ENCODE measurements at regions of chr17 and their contacts with region 1.

Region 1: DNA sequence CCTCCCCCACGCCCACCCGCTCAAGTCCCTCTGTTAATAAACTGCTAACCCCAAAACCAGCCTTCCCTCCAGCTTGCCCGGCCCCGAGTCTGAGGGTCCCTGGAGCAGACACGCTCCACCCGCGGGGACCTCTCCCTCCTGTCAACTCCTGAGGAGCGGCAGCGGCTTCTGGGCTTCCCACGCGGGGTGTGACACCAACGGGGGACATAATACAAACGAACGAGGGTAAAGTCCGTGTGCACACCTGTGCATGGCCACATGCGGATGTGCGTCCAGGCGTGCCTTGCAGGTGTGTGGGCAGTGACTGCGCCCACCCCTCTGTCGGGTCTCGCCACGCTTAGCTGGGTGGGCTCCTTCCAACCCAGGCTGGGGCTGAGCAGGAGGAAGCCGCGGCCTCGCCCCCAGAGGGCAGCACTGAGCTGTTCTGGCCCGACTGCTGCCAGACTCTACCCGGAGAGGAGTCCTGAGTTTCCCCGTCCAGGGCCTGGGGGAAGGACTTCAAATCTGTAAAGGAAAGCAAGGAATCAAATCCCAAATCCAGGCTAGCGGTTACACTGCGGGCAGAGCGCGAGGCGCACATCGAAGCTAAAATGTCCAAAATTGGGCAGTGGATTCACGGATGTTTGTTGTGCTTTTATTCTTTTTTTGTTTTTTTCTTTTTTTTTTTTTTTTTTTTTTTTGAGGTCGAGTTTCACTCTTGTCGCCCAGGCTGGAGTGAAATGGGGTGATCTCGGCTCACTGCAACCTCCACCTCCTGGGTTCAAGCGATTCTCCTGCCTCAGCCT is 24.2 kb upstream of the KRT17 start:
- DNase-seq: peak; percentile 70 to 93 (median 83)
- ATAC-seq: peak; percentile 93
- H3K4me3 ChIP-seq: peak overlapping the region; percentile 87
- H3K4me3 Mint-ChIP-seq: peak overlapping the region in 9 of 10 donors; percentile 63 to 86 (median 81)
- H3K27ac ChIP-seq: peak overlapping the region; percentile 24
- H3K27ac Mint-ChIP-seq: peak overlapping the region in 7 of 9 donors; percentile 28 to 82 (median 77)
- H3K4me1 ChIP-seq: peaks cover 8 to 12% of the 10 kb centered on the region in 2 donors
- H3K4me1 Mint-ChIP-seq: peaks cover 6 to 14% (median 9%) of the 10 kb centered on the region in 7 donors
- H3K27me3 ChIP-seq: no peaks in the 10 kb centered on the region
- H3K27me3 Mint-ChIP-seq: no peaks in the 10 kb centered on the region

Region 2: GRCh38 chr17:40622509-40622928 is 1026.1 kb before region 1 on chr17:
- CTCF ChIA-PET with region 1: no interaction called
- POLR2A ChIA-PET with region 1: no interaction called
- intact Hi-C with region 1: loop called in 1 of 2 experiments (anchors 5 kb)
- DNase-seq: peak in 5 of 9 donors; percentile 38 to 60 (median 53)
- ATAC-seq: peak; percentile 74
- H3K4me3 ChIP-seq: peak overlapping the region; percentile 28
- H3K4me3 Mint-ChIP-seq: peak overlapping the region; percentile 54 to 81 (median 66)
- H3K27ac ChIP-seq: peak overlapping the region; percentile 18
- H3K27ac Mint-ChIP-seq: peak overlapping the region; percentile 11 to 88 (median 73)
- H3K4me1 ChIP-seq: peaks cover 27 to 35% of the 10 kb centered on the region in 2 donors
- H3K4me1 Mint-ChIP-seq: peaks cover 21 to 61% (median 48%) of the 10 kb centered on the region in 7 donors
- H3K27me3 ChIP-seq: no peaks in the 10 kb centered on the region
- H3K27me3 Mint-ChIP-seq: no peaks in the 10 kb centered on the region

Region 3: DNA sequence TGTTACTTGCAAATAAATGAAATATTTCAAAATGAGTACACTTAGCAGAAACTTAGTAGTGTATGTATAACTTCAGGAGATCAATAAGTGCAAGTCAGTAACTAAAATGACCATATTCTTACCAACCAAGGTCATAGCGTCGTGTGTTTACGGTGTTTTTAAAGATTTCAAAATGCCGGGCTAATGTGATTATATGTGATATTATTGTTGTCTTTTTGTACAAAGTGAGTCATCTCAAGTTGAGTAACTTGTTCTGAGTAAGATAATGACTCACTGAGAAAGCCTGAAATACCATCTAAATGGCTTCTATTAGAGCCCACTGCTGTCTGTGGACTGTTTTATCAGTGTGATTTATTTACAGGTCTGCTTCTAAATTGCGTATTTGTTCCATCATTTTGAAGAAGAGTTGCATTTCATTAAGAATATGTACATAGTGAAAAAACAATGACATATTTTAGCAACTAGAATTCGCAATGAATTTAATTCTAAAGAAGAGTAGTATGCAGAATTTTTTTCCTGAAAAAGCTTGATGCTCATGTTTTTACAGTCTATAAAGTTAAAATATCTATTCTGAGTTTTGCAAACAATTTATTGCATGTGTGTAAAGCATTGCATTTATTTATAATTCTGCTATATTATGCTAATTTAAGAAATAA is 794.3 kb before region 1 on chr17:
- CTCF ChIA-PET with region 1: interaction called, 23 read pairs
- POLR2A ChIA-PET with region 1: no interaction called
- intact Hi-C with region 1: loop called (anchors 1 to 5 kb)
- DNase-seq: no peak
- ATAC-seq: no peak
- H3K4me3 ChIP-seq: no peak overlapping the region
- H3K4me3 Mint-ChIP-seq: no peak overlapping the region
- H3K27ac ChIP-seq: no peak overlapping the region
- H3K27ac Mint-ChIP-seq: no peak overlapping the region
- H3K4me1 ChIP-seq: no peaks in the 10 kb centered on the region
- H3K4me1 Mint-ChIP-seq: peaks cover 0 to 6% (median 0%) of the 10 kb centered on the region in 7 donors
- H3K27me3 ChIP-seq: no peaks in the 10 kb centered on the region
- H3K27me3 Mint-ChIP-seq: peaks cover 19 to 53% (median 27%) of the 10 kb centered on the region in 5 donors

Region 4: GRCh38 chr17:41486809-41487720 is 161.5 kb before region 1 on chr17:
- CTCF ChIA-PET with region 1: no interaction called
- POLR2A ChIA-PET with region 1: no interaction called
- intact Hi-C with region 1: loop called in 1 of 2 experiments (anchors 2 kb)
- DNase-seq: peak in 1 of 9 donors; percentile 58
- ATAC-seq: no peak
- H3K4me3 ChIP-seq: no peak overlapping the region
- H3K4me3 Mint-ChIP-seq: no peak overlapping the region
- H3K27ac ChIP-seq: no peak overlapping the region
- H3K27ac Mint-ChIP-seq: no peak overlapping the region
- H3K4me1 ChIP-seq: peaks cover 5% of the 10 kb centered on the region in 2 donors
- H3K4me1 Mint-ChIP-seq: peaks cover 0 to 12% (median 11%) of the 10 kb centered on the region in 7 donors
- H3K27me3 ChIP-seq: no peaks in the 10 kb centered on the region
- H3K27me3 Mint-ChIP-seq: peaks cover 0 to 2% (median 0%) of the 10 kb centered on the region in 5 donors

Region 5: GRCh38 chr17:41659427-41660212 is 11.0 kb after region 1 on chr17:
- CTCF ChIA-PET with region 1: interaction called, 125 read pairs
- POLR2A ChIA-PET with region 1: interaction called, 38 read pairs
- intact Hi-C with region 1: loop called (anchors 1 kb)
- DNase-seq: no peak
- ATAC-seq: no peak
- H3K4me3 ChIP-seq: no peak overlapping the region
- H3K4me3 Mint-ChIP-seq: no peak overlapping the region
- H3K27ac ChIP-seq: no peak overlapping the region
- H3K27ac Mint-ChIP-seq: no peak overlapping the region
- H3K4me1 ChIP-seq: no peaks in the 10 kb centered on the region
- H3K4me1 Mint-ChIP-seq: peaks cover 0 to 7% (median 6%) of the 10 kb centered on the region in 7 donors
- H3K27me3 ChIP-seq: no peaks in the 10 kb centered on the region
- H3K27me3 Mint-ChIP-seq: peaks cover 0 to 6% (median 0%) of the 10 kb centered on the region in 5 donors